Right ventricle myocardium inferior (tissue), 1 donor: ENCODE measurements at regions of chr10 and their contacts with region 1.

Region 1: DNA sequence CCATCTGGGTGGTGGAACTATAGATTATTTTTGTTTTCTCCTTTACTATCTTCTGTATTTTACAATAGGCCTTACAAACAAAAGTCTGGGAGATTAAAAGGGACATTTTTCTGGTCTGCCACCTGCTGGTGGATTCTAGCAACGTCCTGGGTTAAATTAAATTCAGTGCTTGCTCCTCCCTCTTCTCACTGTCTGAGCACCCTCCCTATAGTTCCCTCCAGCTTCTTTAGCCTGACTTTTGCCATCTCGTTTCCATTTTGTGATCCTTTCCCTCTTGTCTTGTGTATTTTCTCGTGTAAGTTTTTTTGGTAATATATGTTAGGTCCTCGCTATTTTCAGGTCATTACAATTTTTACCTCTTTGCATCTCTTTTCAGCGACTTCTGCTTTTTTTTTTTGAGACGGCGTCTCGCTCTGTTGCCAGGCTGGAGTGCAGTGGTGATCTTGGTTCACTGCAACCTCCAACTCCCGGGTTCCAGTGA is 16.1 kb downstream of the ANKRD16 start:
- DNase-seq: no peak
- ATAC-seq: peak; percentile 74

Region 2: GRCh38 chr10:5446390-5446926 is 427.1 kb before region 1 on chr10:
- intact Hi-C with region 1: loop called (anchors 5 kb)
- DNase-seq: peak; percentile 95
- ATAC-seq: peak; percentile 96

Region 3: DNA sequence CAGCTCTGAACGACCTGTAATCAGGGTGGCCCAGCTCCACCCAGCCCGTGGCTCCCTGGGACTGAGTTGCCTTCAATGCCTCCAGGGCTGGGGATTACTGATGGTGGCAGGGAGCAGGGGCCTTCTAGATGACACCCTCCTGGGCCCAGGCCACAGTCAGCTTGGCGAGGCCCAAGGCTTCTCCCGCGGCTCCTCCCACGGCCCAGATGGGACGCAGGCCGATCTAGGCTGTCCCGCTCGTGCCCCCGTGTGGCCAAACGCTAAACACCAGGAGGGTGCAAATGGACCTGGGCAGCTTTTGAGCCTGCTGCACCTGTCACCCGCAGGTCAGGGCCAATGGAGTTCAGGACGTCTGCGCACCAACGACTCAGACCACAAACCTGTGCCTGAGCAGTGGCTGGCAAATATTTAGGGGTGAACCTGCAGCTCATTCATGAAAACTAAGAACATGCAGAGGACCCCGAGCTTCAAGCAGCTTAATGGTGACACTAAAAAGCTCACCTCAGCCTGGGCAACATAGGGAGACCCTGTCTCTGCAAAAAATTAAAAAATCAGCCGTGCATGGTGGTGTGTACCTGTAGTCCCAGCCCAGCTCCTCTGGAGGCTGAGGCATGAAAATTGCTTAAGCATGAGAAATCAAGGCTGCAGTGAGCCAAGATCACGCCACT is 250.3 kb before region 1 on chr10:
- intact Hi-C with region 1: loop called (anchors 2 kb)
- DNase-seq: peak; percentile 94
- ATAC-seq: peak; percentile 92

Region 4: DNA sequence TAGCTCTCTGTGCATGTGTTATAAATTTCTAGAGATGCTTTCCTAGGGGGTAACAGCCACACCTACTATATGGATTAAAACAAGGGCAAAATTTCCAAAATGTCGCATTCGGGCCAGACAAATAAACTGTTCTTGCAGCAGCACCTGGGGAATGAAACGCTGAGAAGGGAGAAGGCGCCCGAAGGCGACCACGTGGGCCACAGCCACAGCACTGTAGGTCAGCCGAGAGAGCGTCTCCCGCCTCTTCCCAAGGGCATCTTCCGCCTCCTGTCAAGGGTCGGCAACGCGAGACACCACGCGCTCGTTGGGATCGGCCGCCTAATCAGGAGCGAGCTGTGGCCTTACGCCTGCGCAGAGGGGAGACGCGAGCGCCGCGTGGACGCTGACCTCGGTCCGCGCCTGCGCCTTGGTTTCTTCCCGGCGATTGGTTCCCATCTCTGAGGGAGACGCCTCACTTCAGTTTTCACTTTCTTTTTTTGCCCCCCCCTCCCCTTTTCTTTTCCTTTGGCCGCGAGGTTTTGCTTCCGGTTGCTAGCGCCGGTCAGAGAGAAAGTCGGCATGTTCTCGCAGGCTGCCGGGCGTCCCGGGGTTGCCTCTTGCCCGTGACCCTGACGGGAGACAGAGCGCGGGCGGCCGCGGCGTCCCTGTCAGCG is 189.1 kb before region 1 on chr10 and contains the start of gene TASOR2:
- intact Hi-C with region 1: loop called (anchors 2 kb)
- DNase-seq: peak; percentile 99
- ATAC-seq: peak; percentile 98
- total RNA-seq, gene TASOR2: 36.7 TPM

Region 5: DNA sequence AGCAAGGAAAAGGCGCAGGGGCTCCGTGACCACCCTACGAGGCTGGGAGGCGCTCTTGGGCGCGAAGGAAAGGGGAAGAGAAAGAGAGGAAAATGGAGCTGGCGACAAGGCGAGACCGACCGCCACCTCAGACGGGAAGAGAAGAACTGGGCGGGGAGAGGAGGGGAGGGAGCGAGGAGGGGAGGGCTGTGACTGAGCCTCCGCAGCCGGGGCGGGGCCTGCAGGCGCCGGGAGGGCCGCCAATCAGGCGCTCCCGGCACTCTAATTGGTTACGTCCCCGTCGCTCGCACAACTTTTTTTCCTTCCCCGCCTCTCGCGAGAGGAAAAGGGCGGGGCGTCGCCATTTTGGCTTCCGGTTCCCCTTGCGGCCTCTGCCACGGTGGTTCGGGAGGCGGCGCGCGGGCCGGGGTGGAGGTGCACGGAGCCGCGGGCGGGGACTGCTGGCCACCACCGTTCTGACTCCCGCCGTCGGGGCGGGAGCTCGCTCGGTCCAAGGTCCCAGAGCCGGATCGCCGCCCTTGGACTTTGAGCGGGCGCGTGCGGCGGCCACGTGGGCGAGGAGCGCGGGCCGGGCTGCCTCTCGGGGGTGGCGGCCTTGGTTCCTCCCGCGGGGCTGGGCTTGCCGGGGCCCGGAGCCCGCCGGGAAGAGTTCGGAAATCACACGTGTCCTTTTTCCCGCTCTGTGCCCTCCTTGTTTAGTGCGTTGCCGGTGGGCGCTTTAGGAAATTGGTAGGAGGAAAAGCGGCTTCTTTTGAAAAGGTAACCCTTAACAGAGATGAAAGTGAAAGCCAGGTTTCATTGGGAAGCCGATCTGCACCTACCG is 60.1 kb before region 1 on chr10 and contains the start of gene GDI2:
- intact Hi-C with region 1: loop called (anchors 2 kb)
- DNase-seq: peak; percentile 97
- ATAC-seq: peak; percentile 99
- total RNA-seq, gene GDI2: 101 TPM